ENCODE measurements at regions of chr1 and their contacts with region 1.

Region 1: GRCh38 chr1:147890177-147890790 is 12.3 kb upstream of the GJA8 start:
- DNase-seq: peak; percentile 53 to 94
- H3K4me3 ChIP-seq: no peak overlapping the region
- H3K27ac ChIP-seq: no peak overlapping the region
- H3K4me1 ChIP-seq: peaks cover 0 to 6% (median 0%) of the 10 kb centered on the region in 4 experiments; a peak in 3 of 7 replicates
- H3K27me3 ChIP-seq: no peaks in the 10 kb centered on the region
- CTCF ChIP-seq: peak; percentile 91 to 97 (median 93)
- EP300 ChIP-seq: no peak
- POLR2A ChIP-seq: no peak
- RAD21 ChIP-seq: peak; percentile 99

Region 2: GRCh38 chr1:147640553-147641165 is 249.6 kb before region 1 on chr1:
- CTCF ChIA-PET with region 1: interaction called, 21 read pairs
- POLR2A ChIA-PET with region 1: no interaction called
- DNase-seq: peak; percentile 77 to 91
- H3K4me3 ChIP-seq: no peak overlapping the region
- H3K27ac ChIP-seq: no peak overlapping the region
- H3K4me1 ChIP-seq: no peaks in the 10 kb centered on the region; a peak in 1 of 7 replicates
- H3K27me3 ChIP-seq: no peaks in the 10 kb centered on the region
- CTCF ChIP-seq: peak; percentile 84 to 93 (median 93)
- EP300 ChIP-seq: 0 out of 3 replicates have a peak, but pooled peaks of 1 of the 2 experiments have one; percentile 40
- POLR2A ChIP-seq: no peak
- RAD21 ChIP-seq: peak; percentile 65 to 71

Region 3: GRCh38 chr1:147647796-147648633 is 242.3 kb before region 1 on chr1:
- CTCF ChIA-PET with region 1: interaction called, 19 read pairs
- POLR2A ChIA-PET with region 1: no interaction called
- DNase-seq: no peak
- H3K4me3 ChIP-seq: no peak overlapping the region
- H3K27ac ChIP-seq: no peak overlapping the region
- H3K4me1 ChIP-seq: no peaks in the 10 kb centered on the region
- H3K27me3 ChIP-seq: no peaks in the 10 kb centered on the region
- CTCF ChIP-seq: peak; percentile 25 to 34 (median 29); a peak in 3 of 4 replicates
- EP300 ChIP-seq: no peak
- POLR2A ChIP-seq: no peak
- RAD21 ChIP-seq: peak; percentile 5 to 29; a peak in 3 of 4 replicates

Region 4: DNA sequence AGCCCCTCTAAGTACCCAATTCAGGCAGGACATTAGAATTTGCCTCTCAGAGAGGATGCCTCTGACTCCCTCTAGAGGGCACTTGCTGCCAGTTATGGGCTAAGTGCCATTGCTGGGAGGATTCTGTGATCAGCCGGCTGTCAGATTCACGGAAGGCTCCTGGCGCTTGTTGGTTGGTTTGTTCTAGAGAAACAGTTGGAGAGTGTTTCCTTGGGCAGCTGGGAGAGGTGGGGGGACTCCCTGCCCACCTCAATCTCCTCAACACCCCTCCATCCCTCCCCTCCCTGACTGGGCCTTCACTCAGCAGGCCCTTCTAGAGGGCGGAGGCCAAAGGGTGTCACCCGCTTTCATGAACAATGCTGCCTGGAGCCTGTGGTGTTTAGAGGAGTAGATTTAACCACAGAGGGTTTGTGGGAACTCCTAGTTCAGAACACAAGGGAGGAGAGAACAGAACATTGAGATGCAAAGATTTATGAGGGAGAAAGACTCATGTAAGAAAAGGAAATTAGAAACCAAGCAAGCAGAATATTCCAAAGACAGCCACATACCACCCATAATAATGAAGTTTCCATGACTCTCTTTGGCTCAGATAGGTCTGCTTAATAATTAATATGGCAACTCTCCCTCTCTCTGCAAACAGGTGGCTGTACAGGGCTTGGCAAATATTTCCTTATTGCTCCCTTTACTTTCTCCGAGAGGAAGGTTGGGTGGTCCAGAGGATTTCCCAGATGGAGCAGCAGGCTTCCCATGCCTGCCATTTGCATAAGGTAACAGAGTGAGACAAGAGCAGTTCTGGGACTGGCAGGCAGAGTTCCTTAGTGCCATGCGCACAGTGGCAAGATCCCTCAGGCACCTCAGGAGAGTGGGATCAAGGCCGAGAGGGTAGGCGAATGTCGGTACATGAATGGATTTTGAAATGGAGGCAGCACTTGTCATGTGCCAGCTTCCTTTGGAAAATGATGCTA is 190.0 kb before region 1 on chr1:
- CTCF ChIA-PET with region 1: interaction called, 14 read pairs
- POLR2A ChIA-PET with region 1: no interaction called
- DNase-seq: peak; percentile 33 to 70
- H3K4me3 ChIP-seq: no peak overlapping the region; a peak in 1 of 8 replicates
- H3K27ac ChIP-seq: no peak overlapping the region
- H3K4me1 ChIP-seq: no peaks in the 10 kb centered on the region; a peak in 1 of 7 replicates
- H3K27me3 ChIP-seq: no peaks in the 10 kb centered on the region; a peak in 1 of 7 replicates
- CTCF ChIP-seq: peak; percentile 69 to 94 (median 83)
- EP300 ChIP-seq: no peak
- POLR2A ChIP-seq: no peak
- RAD21 ChIP-seq: peak; percentile 72 to 83

Region 5: DNA sequence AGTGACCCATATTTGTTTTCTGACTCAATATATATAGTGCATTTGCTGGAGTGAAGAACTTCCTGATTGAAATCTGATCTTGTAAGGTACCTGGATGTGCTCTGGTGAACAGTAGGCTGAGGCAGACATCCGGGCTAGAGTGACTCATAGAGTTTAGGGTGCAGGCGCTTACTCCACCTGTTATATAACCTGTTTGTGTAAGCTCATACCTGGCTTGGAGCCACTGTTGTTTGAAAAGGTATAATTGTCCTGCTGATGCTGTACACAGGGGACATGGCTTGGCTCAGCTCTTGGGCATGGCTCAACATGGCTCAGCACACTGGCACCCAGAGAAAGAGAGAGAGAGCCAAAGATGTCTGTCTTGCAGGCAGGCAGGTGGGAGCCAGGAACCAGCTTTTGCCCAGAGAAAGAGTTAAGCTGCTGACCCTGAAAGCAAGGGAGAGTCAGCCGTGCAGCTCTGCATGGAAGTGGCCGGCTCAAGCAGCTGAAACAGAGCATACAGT is 173.2 kb before region 1 on chr1:
- CTCF ChIA-PET with region 1: interaction called, 206 read pairs
- POLR2A ChIA-PET with region 1: no interaction called
- DNase-seq: no peak
- H3K4me3 ChIP-seq: no peak overlapping the region
- H3K27ac ChIP-seq: no peak overlapping the region
- H3K4me1 ChIP-seq: peaks cover 0 to 2% (median 0%) of the 10 kb centered on the region in 4 experiments; a peak in 4 of 7 replicates
- H3K27me3 ChIP-seq: no peaks in the 10 kb centered on the region; a peak in 1 of 7 replicates
- CTCF ChIP-seq: no peak
- EP300 ChIP-seq: no peak
- POLR2A ChIP-seq: no peak
- RAD21 ChIP-seq: no peak

Region 6: GRCh38 chr1:147723691-147724323 is 166.5 kb before region 1 on chr1:
- CTCF ChIA-PET with region 1: interaction called, 206 read pairs
- POLR2A ChIA-PET with region 1: interaction called, 4 read pairs
- DNase-seq: peak; percentile 53 to 61
- H3K4me3 ChIP-seq: no peak overlapping the region
- H3K27ac ChIP-seq: no peak overlapping the region
- H3K4me1 ChIP-seq: peaks cover 4 to 9% (median 7%) of the 10 kb centered on the region in 4 experiments
- H3K27me3 ChIP-seq: no peaks in the 10 kb centered on the region
- CTCF ChIP-seq: peak; percentile 83 to 96 (median 95)
- EP300 ChIP-seq: no peak
- POLR2A ChIP-seq: no peak
- RAD21 ChIP-seq: peak; percentile 100

Region 7: DNA sequence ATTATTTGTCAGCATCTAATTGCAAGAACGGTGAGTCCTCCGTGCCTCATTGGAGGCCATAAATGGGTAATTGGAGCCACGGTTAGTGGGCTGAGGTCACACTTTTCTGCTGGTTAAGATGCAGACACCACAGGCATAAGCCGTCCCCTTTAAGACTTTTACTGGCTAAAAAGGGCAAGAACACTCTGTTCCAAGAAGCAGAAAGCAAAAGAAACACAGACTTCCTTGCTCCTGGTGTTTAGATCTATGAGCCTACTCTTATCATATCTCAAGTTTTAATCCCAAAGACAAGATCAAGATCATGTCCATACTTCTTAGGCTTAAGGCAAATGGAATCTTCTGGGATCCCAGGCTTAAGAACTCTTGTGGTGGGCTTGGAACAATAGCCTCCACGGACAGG is 112.6 kb before region 1 on chr1:
- CTCF ChIA-PET with region 1: no interaction called
- POLR2A ChIA-PET with region 1: no interaction called
- DNase-seq: no peak
- H3K4me3 ChIP-seq: no peak overlapping the region
- H3K27ac ChIP-seq: no peak overlapping the region
- H3K4me1 ChIP-seq: peaks cover 0 to 8% (median 3%) of the 10 kb centered on the region in 4 experiments; a peak in 5 of 7 replicates
- H3K27me3 ChIP-seq: no peaks in the 10 kb centered on the region; a peak in 1 of 7 replicates
- CTCF ChIP-seq: no peak
- EP300 ChIP-seq: no peak
- POLR2A ChIP-seq: no peak
- RAD21 ChIP-seq: no peak

Region 8: DNA sequence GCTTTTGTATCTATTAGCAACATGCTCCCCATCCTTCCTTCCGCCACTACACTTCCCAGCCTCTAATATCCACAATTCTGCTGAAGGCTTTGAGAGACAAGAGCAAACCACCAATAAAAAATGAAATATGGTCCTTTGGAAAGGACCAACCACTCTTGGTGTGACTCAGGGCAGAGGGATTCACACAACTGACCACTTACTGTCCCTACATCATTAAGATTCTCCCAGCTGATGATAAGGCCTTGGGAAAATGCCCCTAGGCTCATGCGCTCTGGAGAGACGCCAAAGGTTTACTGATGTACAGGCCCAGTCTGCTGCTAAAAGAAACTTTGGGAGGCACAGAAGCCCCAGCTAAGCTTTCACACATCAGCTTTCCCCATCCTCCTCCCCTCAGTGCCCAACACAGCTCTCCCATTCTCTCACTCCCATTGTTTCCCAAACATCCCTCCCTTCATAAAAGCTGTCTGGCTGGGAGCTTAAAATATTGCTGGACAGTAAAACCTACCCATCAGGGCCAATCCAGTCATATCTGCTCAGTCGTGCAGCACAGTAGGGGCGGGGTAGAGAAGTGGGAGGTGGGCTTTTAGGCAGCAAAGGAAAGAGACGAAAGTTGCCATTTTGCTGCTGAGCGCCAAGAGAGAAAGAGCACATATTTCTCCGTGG is 12.0 kb after region 1 on chr1 and contains the start of gene GJA8:
- CTCF ChIA-PET with region 1: interaction called, 21 read pairs
- POLR2A ChIA-PET with region 1: interaction called, 5 read pairs
- DNase-seq: no peak
- H3K4me3 ChIP-seq: no peak within 1 kb of the TSS
- H3K27ac ChIP-seq: no peak within 1 kb of the TSS
- H3K4me1 ChIP-seq: no peaks in the 10 kb centered on the region
- H3K27me3 ChIP-seq: no peaks in the 10 kb centered on the region; a peak in 1 of 7 replicates
- CTCF ChIP-seq: no peak
- EP300 ChIP-seq: no peak
- POLR2A ChIP-seq: no peak
- RAD21 ChIP-seq: no peak
- total RNA-seq, gene GJA8: not detected in 2 replicates